Dorsolateral prefrontal cortex (tissue), 120 donors: ENCODE measurements at regions of chr16 and their contacts with region 1.

Region 1: GRCh38 chr16:61654962-61655361 is 381.3 kb downstream of the CDH8 start:
- DNase-seq: peak in 2 of 10 donors; percentile 37 to 50
- H3K4me3 ChIP-seq: no peak overlapping the region
- H3K27ac ChIP-seq: peak overlapping the region in 4 of 59 donors; percentile 30 to 51 (median 46)
- H3K27me3 ChIP-seq: no peaks in the 10 kb centered on the region
- CTCF ChIP-seq: peak in 52 of 56 donors; percentile 29 to 84 (median 53)

Region 2: DNA sequence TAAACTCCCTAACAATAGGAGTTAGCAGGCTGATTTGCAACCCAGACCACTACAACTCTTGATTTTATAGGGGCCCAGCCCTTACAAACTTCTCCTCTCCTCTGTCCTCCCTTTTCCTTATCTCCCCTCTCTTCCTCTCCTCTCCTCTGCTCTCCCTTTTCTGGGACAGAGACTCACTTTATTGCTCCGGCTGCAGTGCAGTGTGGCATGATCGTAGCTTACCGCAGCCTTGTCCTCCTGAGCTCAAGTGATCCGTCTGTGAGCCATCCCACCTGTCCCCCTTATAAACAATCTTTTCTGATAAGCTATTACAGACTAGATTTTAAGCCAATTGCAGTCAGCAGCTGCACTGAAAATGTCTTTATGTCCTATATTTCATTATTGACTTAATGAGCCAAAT is 37.6 kb before region 1 on chr16:
- intact Hi-C with region 1: no loop called
- DNase-seq: no peak
- H3K4me3 ChIP-seq: no peak overlapping the region
- H3K27ac ChIP-seq: no peak overlapping the region
- H3K27me3 ChIP-seq: peaks cover 0 to 2% (median 0%) of the 10 kb centered on the region in 45 donors
- CTCF ChIP-seq: no peak

Region 3: GRCh38 chr16:61946019-61946418 is 291.1 kb after region 1 on chr16:
- intact Hi-C with region 1: loop called in 1 of 2 experiments (anchors 10 kb)
- DNase-seq: no peak
- H3K4me3 ChIP-seq: peak overlapping the region in 29 of 59 donors; percentile 3 to 44 (median 23)
- H3K27ac ChIP-seq: peak overlapping the region in 6 of 59 donors; percentile 5 to 59 (median 38)
- H3K27me3 ChIP-seq: peaks cover 0 to 3% (median 0%) of the 10 kb centered on the region in 45 donors
- CTCF ChIP-seq: peak in 19 of 56 donors; percentile 8 to 36 (median 14)

Region 4: DNA sequence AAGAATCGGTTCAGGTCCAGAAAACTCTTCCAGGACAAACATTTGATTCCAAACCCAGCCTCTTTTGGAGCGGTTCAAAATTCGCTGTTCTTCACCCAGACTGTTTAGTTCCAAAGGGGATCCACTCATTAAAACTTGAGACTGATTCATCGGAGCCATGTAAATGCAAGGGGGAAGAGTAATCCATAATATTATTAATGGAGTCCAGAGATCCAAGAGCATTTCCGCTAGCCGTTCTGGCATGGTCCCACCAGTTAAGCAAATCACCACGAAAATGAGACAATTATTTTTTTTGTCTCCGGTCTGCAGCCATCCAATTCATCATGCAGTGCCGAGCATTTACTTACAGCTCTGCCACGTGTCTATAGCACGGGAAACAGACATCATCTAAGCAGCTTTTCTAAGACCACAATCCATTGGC is 366.2 kb after region 1 on chr16:
- intact Hi-C with region 1: no loop called
- DNase-seq: no peak
- H3K4me3 ChIP-seq: peak overlapping the region in 56 of 59 donors; percentile 3 to 62 (median 35)
- H3K27ac ChIP-seq: peak overlapping the region in 2 of 59 donors; percentile 29
- H3K27me3 ChIP-seq: no peaks in the 10 kb centered on the region
- CTCF ChIP-seq: no peak

Region 5: DNA sequence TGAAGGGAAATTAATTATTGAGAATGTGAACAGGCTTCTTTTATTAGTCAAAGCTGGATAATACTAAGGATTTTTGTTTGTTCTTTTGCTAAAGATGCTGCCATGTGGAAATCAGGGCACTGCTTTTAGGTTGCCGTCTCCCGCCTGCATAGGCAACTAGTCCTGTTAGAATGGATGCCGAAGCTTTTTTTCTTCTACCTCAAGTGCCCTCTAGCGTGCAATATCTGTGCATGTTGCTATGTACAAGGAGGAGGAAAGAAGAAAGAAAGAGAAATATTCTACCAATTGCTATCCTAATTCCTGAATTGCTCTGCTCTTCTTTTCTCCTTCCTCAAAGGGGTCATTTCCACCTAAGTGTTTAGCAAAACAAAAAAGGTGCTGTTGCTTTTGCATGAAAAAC is 386.4 kb after region 1 on chr16:
- intact Hi-C with region 1: loop called (anchors 2 to 5 kb)
- DNase-seq: peak in 6 of 10 donors; percentile 41 to 76 (median 54)
- H3K4me3 ChIP-seq: peak overlapping the region in 26 of 59 donors; percentile 4 to 41 (median 24)
- H3K27ac ChIP-seq: peak overlapping the region in 1 of 59 donors; percentile 40
- H3K27me3 ChIP-seq: peaks cover 0 to 12% (median 0%) of the 10 kb centered on the region in 45 donors
- CTCF ChIP-seq: peak in 55 of 56 donors; percentile 36 to 90 (median 74)